Vagina (tissue), 2 donors: ENCODE measurements at regions of chr1 and their contacts with region 1.

Region 1: DNA sequence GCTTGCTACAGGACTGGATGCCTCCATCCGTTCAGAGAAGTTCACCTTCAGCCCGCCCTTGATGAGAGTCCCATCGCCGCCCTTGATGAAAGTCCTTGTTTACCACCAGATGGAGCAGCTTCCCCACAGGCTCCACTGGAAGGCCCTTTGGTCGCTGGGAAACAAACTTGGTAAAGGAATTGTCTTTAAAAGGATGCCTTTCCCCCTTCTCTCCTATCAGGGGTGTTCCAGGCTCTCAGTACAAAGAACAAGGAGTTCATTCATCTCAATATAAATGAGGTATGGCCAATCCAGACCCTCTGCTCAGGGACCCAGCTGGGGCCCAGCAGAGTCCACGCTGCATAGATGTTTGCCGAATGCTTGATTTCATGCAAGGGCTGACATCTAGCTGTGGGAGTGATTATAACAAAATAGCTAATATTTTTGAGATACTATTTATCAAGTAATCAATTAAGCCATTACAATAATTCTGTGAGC is 50.8 kb downstream of the CAPN9 start:
- DNase-seq: peak in 1 of 2 donors; percentile 40
- H3K4me3 ChIP-seq: no peak overlapping the region
- H3K27ac ChIP-seq: no peak overlapping the region
- H3K4me1 ChIP-seq: no peaks in the 10 kb centered on the region
- H3K27me3 ChIP-seq: no peaks in the 10 kb centered on the region
- CTCF ChIP-seq: peak; percentile 53 to 70 (median 68)
- POLR2A ChIP-seq: no peak

Region 2: GRCh38 chr1:230632273-230632873 is 165.6 kb before region 1 on chr1:
- intact Hi-C with region 1: no loop called
- DNase-seq: no peak
- H3K4me3 ChIP-seq: no peak overlapping the region
- H3K27ac ChIP-seq: no peak overlapping the region
- H3K4me1 ChIP-seq: no peaks in the 10 kb centered on the region
- H3K27me3 ChIP-seq: no peaks in the 10 kb centered on the region
- CTCF ChIP-seq: no peak
- POLR2A ChIP-seq: no peak

Region 3: GRCh38 chr1:230917284-230918135 is 119.5 kb after region 1 on chr1:
- intact Hi-C with region 1: loop called (anchors 10 kb)
- DNase-seq: no peak
- H3K4me3 ChIP-seq: no peak overlapping the region
- H3K27ac ChIP-seq: no peak overlapping the region
- H3K4me1 ChIP-seq: no peaks in the 10 kb centered on the region
- H3K27me3 ChIP-seq: no peaks in the 10 kb centered on the region
- CTCF ChIP-seq: peak; percentile 13 to 47 (median 36)
- POLR2A ChIP-seq: no peak

Region 4: GRCh38 chr1:231206856-231207255 is 408.9 kb after region 1 on chr1:
- intact Hi-C with region 1: loop called (anchors 5 kb)
- DNase-seq: no peak
- H3K4me3 ChIP-seq: no peak overlapping the region
- H3K27ac ChIP-seq: no peak overlapping the region
- H3K4me1 ChIP-seq: no peaks in the 10 kb centered on the region
- H3K27me3 ChIP-seq: no peaks in the 10 kb centered on the region
- CTCF ChIP-seq: no peak
- POLR2A ChIP-seq: no peak

Region 5: GRCh38 chr1:231348442-231348841 is 550.5 kb after region 1 on chr1:
- intact Hi-C with region 1: loop called (anchors 5 kb)
- DNase-seq: no peak
- H3K4me3 ChIP-seq: no peak overlapping the region
- H3K27ac ChIP-seq: no peak overlapping the region
- H3K4me1 ChIP-seq: no peaks in the 10 kb centered on the region
- H3K27me3 ChIP-seq: no peaks in the 10 kb centered on the region
- CTCF ChIP-seq: no peak
- POLR2A ChIP-seq: no peak